Activated naive CD4-positive, alpha-beta T cell treated with anti-CD3 and anti-CD28 coated beads for 36 hours (primary cell): ENCODE measurements at regions of chr15 and their contacts with region 1.

Region 1: GRCh38 chr15:69475769-69476358 is 23.2 kb downstream of the RPLP1 start:
- DNase-seq: peak; percentile 82
- H3K4me3 Mint-ChIP-seq: no peak overlapping the region
- H3K27ac Mint-ChIP-seq: no peak overlapping the region
- H3K4me1 Mint-ChIP-seq: no peaks in the 10 kb centered on the region
- H3K27me3 Mint-ChIP-seq: no peaks in the 10 kb centered on the region

Region 2: GRCh38 chr15:69462493-69463181 is 13.2 kb before region 1 on chr15:
- CTCF ChIA-PET with region 1: interaction called, 10 read pairs
- intact Hi-C with region 1: no loop called
- DNase-seq: peak; percentile 93
- H3K4me3 Mint-ChIP-seq: peak overlapping the region; percentile 87
- H3K27ac Mint-ChIP-seq: peak overlapping the region; percentile 87
- H3K4me1 Mint-ChIP-seq: peaks cover 21% of the 10 kb centered on the region
- H3K27me3 Mint-ChIP-seq: no peaks in the 10 kb centered on the region

Region 3: DNA sequence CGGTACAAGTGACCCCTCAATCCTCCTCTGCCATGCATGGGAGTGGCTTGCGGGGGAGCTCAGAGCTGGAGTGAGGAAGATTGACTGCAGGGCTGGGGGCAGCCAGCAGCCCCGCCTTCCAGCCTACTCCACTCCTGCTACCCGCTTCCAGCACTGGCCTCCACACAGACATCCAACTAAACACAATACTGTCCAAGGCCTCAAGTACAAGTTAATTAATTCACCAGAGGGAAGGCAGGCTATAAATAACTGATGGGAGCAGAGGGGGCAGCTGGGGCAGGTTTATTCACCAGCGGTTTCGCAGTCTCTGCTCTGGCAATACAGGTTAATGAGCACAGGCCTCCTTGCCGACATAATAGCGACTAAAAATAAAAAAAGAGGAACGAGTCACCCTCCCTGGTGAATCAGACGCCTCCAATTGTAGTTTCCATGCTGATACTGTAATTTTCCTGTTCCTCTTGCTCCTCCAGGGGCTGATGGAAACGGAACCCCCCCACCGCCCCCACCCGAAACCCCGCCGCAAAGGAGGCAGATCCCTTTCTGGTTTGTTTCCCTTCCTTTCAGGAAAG is 788.2 kb after region 1 on chr15:
- CTCF ChIA-PET with region 1: no interaction called
- intact Hi-C with region 1: loop called (anchors 10 kb)
- DNase-seq: no peak
- H3K4me3 Mint-ChIP-seq: no peak overlapping the region
- H3K27ac Mint-ChIP-seq: no peak overlapping the region
- H3K4me1 Mint-ChIP-seq: peaks cover 34% of the 10 kb centered on the region
- H3K27me3 Mint-ChIP-seq: peaks cover 4% of the 10 kb centered on the region

Region 4: GRCh38 chr15:70355275-70355795 is 879.5 kb after region 1 on chr15:
- CTCF ChIA-PET with region 1: no interaction called
- intact Hi-C with region 1: loop called (anchors 10 kb)
- DNase-seq: no peak
- H3K4me3 Mint-ChIP-seq: no peak overlapping the region
- H3K27ac Mint-ChIP-seq: no peak overlapping the region
- H3K4me1 Mint-ChIP-seq: no peaks in the 10 kb centered on the region
- H3K27me3 Mint-ChIP-seq: no peaks in the 10 kb centered on the region

Region 5: GRCh38 chr15:70461992-70462391 is 986.1 kb after region 1 on chr15:
- CTCF ChIA-PET with region 1: interaction called, 12 read pairs
- intact Hi-C with region 1: loop called (anchors 2 kb)
- DNase-seq: no peak
- H3K4me3 Mint-ChIP-seq: no peak overlapping the region
- H3K27ac Mint-ChIP-seq: no peak overlapping the region
- H3K4me1 Mint-ChIP-seq: peaks cover 11% of the 10 kb centered on the region
- H3K27me3 Mint-ChIP-seq: no peaks in the 10 kb centered on the region

Region 6: DNA sequence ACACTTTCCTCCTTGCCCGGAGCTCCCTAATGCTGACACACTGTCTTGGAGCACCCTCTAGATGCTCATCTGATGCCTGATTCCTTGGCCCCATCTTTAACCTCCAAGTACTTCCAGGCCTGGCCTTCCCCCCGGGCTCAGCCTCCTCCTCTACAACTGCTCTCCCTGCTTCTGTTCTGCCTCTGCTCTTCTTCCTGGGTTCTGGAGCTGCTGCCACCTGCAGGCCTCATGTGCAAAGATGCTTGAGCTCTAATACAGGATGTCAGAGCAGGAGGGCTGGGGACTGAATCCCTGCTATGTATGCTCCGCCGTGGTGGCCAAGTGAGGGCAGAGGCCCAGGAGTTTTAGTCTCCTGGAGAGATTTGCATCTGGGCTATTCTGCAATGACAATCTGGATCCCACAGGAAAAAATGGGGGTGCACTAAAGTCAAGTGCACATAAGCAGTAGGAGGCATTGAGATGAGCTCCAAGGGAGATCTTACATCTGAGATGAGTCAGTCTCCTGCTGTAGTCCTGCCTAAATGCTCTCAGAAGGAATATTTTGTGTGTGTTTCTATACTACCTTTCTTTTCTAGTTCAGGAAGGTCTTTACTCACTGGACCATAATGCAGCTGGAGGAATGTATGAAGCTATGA is 991.1 kb after region 1 on chr15:
- CTCF ChIA-PET with region 1: interaction called, 12 read pairs
- intact Hi-C with region 1: no loop called
- DNase-seq: peak; percentile 71
- H3K4me3 Mint-ChIP-seq: no peak overlapping the region
- H3K27ac Mint-ChIP-seq: no peak overlapping the region
- H3K4me1 Mint-ChIP-seq: peaks cover 4% of the 10 kb centered on the region
- H3K27me3 Mint-ChIP-seq: no peaks in the 10 kb centered on the region

Region 7: GRCh38 chr15:70722266-70723121 is 1246.6 kb after region 1 on chr15:
- CTCF ChIA-PET with region 1: interaction called, 6 read pairs
- intact Hi-C with region 1: loop called (anchors 10 kb)
- DNase-seq: no peak
- H3K4me3 Mint-ChIP-seq: no peak overlapping the region
- H3K27ac Mint-ChIP-seq: no peak overlapping the region
- H3K4me1 Mint-ChIP-seq: no peaks in the 10 kb centered on the region
- H3K27me3 Mint-ChIP-seq: peaks cover 2% of the 10 kb centered on the region